ENCODE measurements at regions of chr2 and their contacts with region 1.

Region 1: DNA sequence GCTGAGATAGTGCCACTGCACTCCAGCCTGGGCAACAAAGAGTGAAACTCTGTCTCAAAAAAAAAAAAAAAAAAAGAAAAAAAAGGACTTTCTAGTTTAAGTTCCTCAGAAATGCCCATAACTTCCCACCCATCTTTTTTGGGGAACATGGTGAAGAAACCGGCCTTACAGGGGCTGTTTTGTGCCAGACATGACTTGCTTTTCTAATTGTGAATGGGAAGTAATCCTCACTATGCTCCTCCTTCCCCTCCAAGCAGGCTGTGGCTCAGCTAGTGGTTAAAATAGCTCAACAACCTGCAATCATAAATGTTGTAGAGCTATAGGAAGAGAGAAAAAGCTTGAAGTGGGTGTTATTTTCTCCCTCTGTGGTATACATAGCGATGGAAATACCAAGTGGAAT is 34.1 kb upstream of the OLA1 start:
- H3K4me3 Mint-ChIP-seq: peak overlapping the region; percentile 17
- H3K27ac Mint-ChIP-seq: peak overlapping the region; percentile 57
- H3K4me1 Mint-ChIP-seq: peaks cover 36% of the 10 kb centered on the region
- H3K27me3 Mint-ChIP-seq: peaks cover 2% of the 10 kb centered on the region

Region 2: DNA sequence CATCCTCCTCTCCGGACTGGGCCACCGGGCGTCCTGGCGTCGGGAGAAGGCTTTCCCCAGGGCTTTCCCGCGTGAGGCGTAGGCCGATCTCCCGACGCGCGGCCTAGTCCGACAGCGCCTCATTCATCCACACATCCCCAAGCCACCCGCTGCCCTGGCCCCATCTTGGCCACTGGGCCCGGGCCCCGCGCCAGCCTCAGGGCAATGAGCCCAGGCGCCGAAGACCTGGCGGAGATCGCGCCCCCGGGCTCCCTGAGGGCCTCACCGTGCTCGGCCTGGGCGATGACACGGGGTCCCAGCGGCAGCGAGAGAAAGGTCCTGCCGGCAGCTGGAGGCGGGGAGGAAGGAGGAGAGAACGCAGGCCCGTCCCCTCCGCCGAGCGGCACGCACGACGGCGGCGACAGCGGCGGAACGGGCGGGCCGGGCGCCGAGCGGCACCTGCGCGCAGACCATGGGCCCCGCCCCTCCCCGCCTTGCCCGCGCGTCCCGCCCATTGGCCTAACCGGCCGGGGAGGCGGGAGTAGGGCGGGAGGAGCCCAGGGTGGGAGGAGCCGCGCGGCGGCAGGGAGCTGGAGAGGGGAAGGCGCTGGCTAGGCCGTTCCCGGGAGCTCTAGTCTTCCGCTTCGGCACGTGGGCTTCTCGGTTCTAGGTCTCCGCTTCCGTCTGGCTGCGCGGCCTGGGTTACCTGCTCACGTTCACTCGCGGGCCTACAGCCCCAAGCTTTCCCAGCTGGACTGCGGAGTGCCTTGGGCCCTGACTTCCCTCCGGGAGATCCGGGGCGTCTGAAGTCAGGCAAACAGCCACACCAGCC is 34.0 kb before region 1 on chr2 and contains the start of gene OLA1:
- intact Hi-C with region 1: loop called (anchors 2 kb)
- H3K4me3 Mint-ChIP-seq: peak within 1 kb of the TSS; percentile 79
- H3K27ac Mint-ChIP-seq: peak within 1 kb of the TSS; percentile 86
- H3K4me1 Mint-ChIP-seq: peaks cover 9% of the 10 kb centered on the region
- H3K27me3 Mint-ChIP-seq: no peaks in the 10 kb centered on the region

Region 3: DNA sequence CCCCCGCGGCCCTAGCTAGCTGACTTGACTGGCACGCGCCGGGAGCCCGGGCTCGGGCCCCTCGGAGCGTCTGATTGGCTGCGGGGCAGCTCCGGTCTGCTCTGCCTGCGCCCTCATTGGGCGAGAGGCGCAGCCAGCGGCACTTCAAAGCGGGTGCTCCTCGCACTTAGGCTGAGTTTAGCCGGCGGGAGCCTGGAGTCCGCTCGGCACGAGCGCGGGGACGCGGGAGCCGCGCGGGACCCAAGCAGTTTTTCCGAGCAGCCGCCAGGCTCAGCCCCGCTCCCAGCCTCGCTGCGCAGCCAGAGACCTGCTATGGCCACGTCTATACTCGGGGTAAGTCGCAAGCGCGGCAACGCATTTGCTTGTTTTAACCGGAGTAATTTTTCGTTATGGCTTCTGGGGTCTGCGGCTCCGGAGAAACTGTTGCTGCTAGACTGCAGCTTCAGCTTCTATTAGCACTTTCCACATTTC is 52.4 kb after region 1 on chr2 and contains the start of gene SP9:
- intact Hi-C with region 1: loop called (anchors 5 kb)
- H3K4me3 Mint-ChIP-seq: peak within 1 kb of the TSS; percentile 65
- H3K27ac Mint-ChIP-seq: no peak within 1 kb of the TSS
- H3K4me1 Mint-ChIP-seq: peaks cover 46% of the 10 kb centered on the region
- H3K27me3 Mint-ChIP-seq: peaks cover 92% of the 10 kb centered on the region